ENCODE measurements at regions of chr2 and their contacts with region 1.

Region 1: GRCh38 chr2:186460465-186460864 is 25.6 kb upstream of the ZC3H15 start:
- DNase-seq: peak in 1 of 4 experiments; percentile 23
- ATAC-seq: peak; percentile 78
- H3K4me3 ChIP-seq: no peak overlapping the region
- H3K27ac ChIP-seq: no peak overlapping the region
- H3K4me1 ChIP-seq: no peaks in the 10 kb centered on the region
- H3K27me3 ChIP-seq: no peaks in the 10 kb centered on the region
- CTCF ChIP-seq: peak; percentile 30 to 44 (median 43); a peak in 4 of 6 replicates
- EP300 ChIP-seq: no peak
- POLR2A ChIP-seq: no peak
- RAD21 ChIP-seq: peak; percentile 54 to 80; a peak in 3 of 4 replicates

Region 2: GRCh38 chr2:184611361-184612085 is 1848.9 kb before region 1 on chr2:
- CTCF ChIA-PET with region 1: no interaction called
- POLR2A ChIA-PET with region 1: no interaction called
- in situ Hi-C with region 1: no loop called
- intact Hi-C with region 1: loop called (anchors 10 kb)
- DNase-seq: peak in 2 of 4 experiments; percentile 15 to 23
- ATAC-seq: no peak
- H3K4me3 ChIP-seq: no peak overlapping the region
- H3K27ac ChIP-seq: no peak overlapping the region
- H3K4me1 ChIP-seq: no peaks in the 10 kb centered on the region
- H3K27me3 ChIP-seq: no peaks in the 10 kb centered on the region
- CTCF ChIP-seq: peak in 1 of 3 experiments; percentile 43; a peak in 2 of 6 replicates
- EP300 ChIP-seq: no peak
- POLR2A ChIP-seq: no peak
- RAD21 ChIP-seq: peak in 1 of 2 experiments; percentile 36; a peak in 2 of 4 replicates

Region 3: DNA sequence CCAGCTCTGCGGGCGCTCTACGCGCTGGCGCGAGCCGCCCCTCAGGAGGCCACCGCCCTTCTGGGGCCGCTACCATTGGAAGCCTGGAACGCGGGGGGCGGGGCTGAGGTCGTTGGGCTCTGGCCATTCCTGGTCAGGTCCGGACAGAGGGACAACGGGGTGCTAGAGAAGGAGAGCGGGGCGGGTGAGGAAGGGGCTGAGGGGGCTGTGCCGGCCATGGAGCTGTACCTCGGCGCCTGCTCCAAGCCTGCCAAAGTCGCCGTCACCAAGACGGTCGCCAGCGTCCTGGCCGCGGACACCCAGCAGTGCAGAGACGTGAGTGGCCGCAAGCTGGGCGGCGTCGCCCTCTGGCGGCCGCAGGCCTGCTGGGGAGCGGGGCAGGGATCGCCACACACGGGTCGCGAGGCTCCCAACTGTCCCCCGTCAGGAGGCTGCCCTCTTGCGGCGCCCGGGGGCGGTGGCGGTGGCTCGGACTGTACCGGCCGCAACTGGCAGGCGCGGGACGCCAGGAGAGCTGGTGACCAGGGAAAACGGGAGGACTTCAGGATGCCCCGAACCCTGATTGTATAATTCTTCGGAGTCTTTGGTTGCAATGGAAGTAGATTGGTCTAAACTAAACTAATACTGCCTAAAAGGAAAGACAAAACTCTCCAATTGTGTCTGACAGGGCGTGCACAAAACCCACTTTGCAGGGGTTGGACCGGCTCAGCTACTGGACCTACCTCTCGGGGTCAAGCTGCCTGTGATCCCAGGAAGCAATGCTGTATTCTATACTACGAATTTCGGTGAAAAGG is 721.6 kb before region 1 on chr2 and contains the start of gene FSIP2:
- CTCF ChIA-PET with region 1: no interaction called
- POLR2A ChIA-PET with region 1: no interaction called
- in situ Hi-C with region 1: no loop called
- intact Hi-C with region 1: loop called (anchors 10 kb)
- DNase-seq: peak; percentile 50 to 63 (median 58)
- ATAC-seq: peak; percentile 100
- H3K4me3 ChIP-seq: peak within 1 kb of the TSS; percentile 25; the same call in 1 of the 2 replicates
- H3K27ac ChIP-seq: no peak within 1 kb of the TSS
- H3K4me1 ChIP-seq: peaks cover 0 to 6% of the 10 kb centered on the region in 2 experiments; a peak in 1 of 5 replicates
- H3K27me3 ChIP-seq: no peaks in the 10 kb centered on the region
- CTCF ChIP-seq: peak; percentile 71 to 96 (median 73)
- EP300 ChIP-seq: no peak
- POLR2A ChIP-seq: no peak
- RAD21 ChIP-seq: peak; percentile 77 to 80
- polyA plus RNA-seq, gene FSIP2: 0.01 TPM in 1 of 2 experiments, not detected in the other

Region 4: GRCh38 chr2:186256540-186256939 is 203.9 kb before region 1 on chr2:
- CTCF ChIA-PET with region 1: no interaction called
- POLR2A ChIA-PET with region 1: no interaction called
- in situ Hi-C with region 1: no loop called
- intact Hi-C with region 1: loop called (anchors 10 kb)
- DNase-seq: peak in 1 of 4 experiments; percentile 23
- ATAC-seq: no peak
- H3K4me3 ChIP-seq: no peak overlapping the region
- H3K27ac ChIP-seq: no peak overlapping the region
- H3K4me1 ChIP-seq: no peaks in the 10 kb centered on the region
- H3K27me3 ChIP-seq: no peaks in the 10 kb centered on the region
- CTCF ChIP-seq: peak in 1 of 3 experiments; percentile 36; a peak in 2 of 6 replicates
- EP300 ChIP-seq: no peak
- POLR2A ChIP-seq: no peak
- RAD21 ChIP-seq: peak; percentile 57 to 73